Mammary epithelial cell (primary cell): ENCODE measurements at regions of chr3 and their contacts with region 1.

Region 1: DNA sequence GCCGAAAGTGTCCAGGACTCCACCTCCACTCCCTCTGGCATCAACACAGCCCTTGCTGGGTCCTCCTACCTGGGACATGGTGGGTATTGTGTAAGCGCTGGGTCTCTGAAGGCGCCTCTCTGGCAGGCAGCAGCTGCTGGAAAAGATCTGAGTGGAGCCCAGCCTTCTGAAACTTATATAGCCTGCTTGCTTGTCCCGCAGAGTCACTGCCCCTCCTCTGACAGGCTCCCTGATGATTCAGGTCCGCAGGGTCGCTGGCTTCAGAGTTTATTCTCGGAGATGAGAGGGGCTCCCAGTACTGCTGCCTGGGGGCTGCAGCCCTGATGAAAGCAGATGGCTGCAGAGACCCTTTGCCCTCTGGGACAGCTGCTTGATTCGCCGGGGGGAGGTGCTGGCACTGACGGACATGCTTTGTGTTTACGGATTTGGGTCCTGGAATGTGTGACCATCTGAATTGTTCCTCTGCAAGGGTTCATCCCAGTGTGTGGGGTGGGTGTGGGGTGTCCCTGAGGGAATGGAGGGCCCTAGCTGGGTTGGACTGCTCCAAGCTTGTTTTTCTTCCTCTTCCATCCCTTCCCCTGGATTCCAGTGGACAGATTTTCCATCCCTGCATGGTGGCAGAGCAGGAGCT is at the start of gene MUSTN1:
- DNase-seq: no peak
- H3K4me3 ChIP-seq: no peak within 1 kb of the TSS
- H3K27ac ChIP-seq: no peak within 1 kb of the TSS
- H3K4me1 ChIP-seq: peaks cover 20% of the 10 kb centered on the region
- H3K27me3 ChIP-seq: no peaks in the 10 kb centered on the region
- CTCF ChIP-seq: no peak
- total RNA-seq, gene MUSTN1: not detected

Region 2: GRCh38 chr3:52897130-52898122 is 62.4 kb after region 1 on chr3 and contains the start of gene STIMATE:
- CTCF ChIA-PET with region 1: no interaction called
- dilution Hi-C with region 1: loop called (anchors 5 kb)
- in situ Hi-C with region 1: no loop called
- intact Hi-C with region 1: no loop called
- DNase-seq: peak; percentile 84
- H3K4me3 ChIP-seq: peak within 1 kb of the TSS; percentile 64 to 88 (median 76)
- H3K27ac ChIP-seq: peak within 1 kb of the TSS; percentile 47
- H3K4me1 ChIP-seq: peaks cover 14% of the 10 kb centered on the region
- H3K27me3 ChIP-seq: no peaks in the 10 kb centered on the region
- CTCF ChIP-seq: no peak
- total RNA-seq, gene STIMATE: 14.7 to 20.9 TPM

Region 3: GRCh38 chr3:53089511-53089910 is 254.5 kb after region 1 on chr3:
- CTCF ChIA-PET with region 1: no interaction called
- dilution Hi-C with region 1: no loop called
- in situ Hi-C with region 1: no loop called
- intact Hi-C with region 1: no loop called
- DNase-seq: peak; percentile 68
- H3K4me3 ChIP-seq: no peak overlapping the region
- H3K27ac ChIP-seq: no peak overlapping the region
- H3K4me1 ChIP-seq: peaks cover 13% of the 10 kb centered on the region
- H3K27me3 ChIP-seq: no peaks in the 10 kb centered on the region
- CTCF ChIP-seq: peak in 1 of 2 donors; percentile 10

Region 4: DNA sequence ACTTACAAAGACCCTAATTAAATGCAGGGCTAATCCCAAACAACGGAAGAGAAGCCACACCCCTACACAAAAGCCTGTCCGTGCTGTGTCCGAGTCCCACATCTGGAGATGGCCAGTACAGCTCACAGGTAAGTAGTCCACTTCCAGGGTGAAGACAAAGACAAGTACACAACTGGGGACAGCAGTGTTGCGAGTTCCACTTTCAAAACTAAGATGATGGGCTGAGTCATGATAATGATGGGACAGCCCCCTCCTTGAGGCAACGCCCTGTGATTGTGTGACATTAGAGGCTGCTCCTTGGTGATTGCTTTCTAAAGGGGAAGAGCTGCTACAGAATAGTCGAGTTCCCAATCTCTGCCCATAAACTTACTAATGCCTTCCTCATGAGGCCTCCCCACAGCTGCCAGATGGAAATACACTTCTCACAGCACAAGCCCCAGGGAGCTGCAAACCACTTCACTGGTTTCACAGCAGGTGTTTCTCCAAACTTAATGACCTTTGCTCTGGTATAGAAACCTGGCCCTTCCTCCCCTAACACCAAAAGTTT is 267.7 kb after region 1 on chr3:
- CTCF ChIA-PET with region 1: no interaction called
- dilution Hi-C with region 1: no loop called
- in situ Hi-C with region 1: no loop called
- intact Hi-C with region 1: no loop called
- DNase-seq: no peak
- H3K4me3 ChIP-seq: no peak overlapping the region
- H3K27ac ChIP-seq: no peak overlapping the region
- H3K4me1 ChIP-seq: no peaks in the 10 kb centered on the region
- H3K27me3 ChIP-seq: no peaks in the 10 kb centered on the region
- CTCF ChIP-seq: no peak